ENCODE measurements at regions of chr6 and their contacts with region 1.

Region 1: GRCh38 chr6:28124102-28124970 is at the start of gene ZSCAN16:
- DNase-seq: peak; percentile 79 to 85
- H3K4me3 ChIP-seq: peak within 1 kb of the TSS; percentile 64
- H3K27ac ChIP-seq: 0 out of 2 replicates have a peak within 1 kb of the TSS, but pooled peaks have one; percentile 7
- H3K4me1 ChIP-seq: peaks cover 7% of the 10 kb centered on the region
- H3K27me3 ChIP-seq: no peaks in the 10 kb centered on the region
- CTCF ChIP-seq: no peak
- total RNA-seq, gene ZSCAN16: 5.6 and 5.9 TPM in 2 replicates

Region 2: DNA sequence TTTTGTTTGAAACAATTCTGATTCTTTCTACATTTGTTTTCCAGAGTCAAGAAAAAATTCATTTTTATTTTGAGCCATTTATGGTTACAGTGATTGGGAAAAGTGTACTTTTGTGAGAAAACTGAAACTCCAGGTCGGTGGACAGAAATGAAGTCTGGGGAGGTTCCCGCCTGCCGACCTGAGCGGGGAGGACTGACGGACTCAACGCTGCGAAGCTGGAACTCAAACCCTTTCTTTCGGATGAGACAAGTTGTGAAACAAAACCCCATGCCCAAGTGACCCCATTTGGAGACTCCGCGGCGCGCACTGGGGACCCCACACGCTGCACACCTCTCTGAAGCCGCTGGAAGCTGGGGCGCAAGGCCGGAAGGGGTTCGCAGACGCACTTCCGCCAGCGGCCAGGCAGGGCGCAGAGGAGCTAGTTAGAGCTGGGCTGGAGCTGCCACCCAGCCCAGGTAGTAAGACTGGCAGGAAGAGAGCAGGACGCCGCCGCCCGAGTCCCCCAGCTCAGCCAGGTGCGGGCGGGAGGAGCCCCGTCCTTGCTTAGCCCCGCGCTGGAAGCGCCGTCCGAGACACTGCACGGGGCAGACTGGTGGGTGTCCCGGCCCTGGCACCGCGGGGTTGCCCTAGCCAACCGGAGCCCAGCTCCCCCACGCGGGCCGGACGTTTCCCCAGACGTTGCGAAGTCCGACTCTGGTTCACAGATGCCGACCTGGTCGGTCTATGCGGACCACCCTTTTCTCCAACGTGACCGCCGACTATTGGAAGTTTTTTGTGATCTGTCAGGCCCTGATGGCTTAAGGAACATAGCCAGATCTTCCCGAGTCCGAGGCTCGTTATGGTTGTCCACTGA is 19.7 kb before region 1 on chr6:
- CTCF ChIA-PET with region 1: no interaction called
- POLR2A ChIA-PET with region 1: no interaction called
- intact Hi-C with region 1: loop called (anchors 1 kb)
- DNase-seq: peak; percentile 73 to 80
- H3K4me3 ChIP-seq: peak overlapping the region; percentile 83
- H3K27ac ChIP-seq: no peak overlapping the region
- H3K4me1 ChIP-seq: peaks cover 11% of the 10 kb centered on the region
- H3K27me3 ChIP-seq: peaks cover 7% of the 10 kb centered on the region; the same call in 1 of the 2 replicates
- CTCF ChIP-seq: peak; percentile 74

Region 3: GRCh38 chr6:28371706-28372451 is 247.5 kb after region 1 on chr6:
- CTCF ChIA-PET with region 1: no interaction called
- POLR2A ChIA-PET with region 1: interaction called, 11 read pairs
- intact Hi-C with region 1: no loop called
- DNase-seq: no peak
- H3K4me3 ChIP-seq: no peak overlapping the region
- H3K27ac ChIP-seq: no peak overlapping the region
- H3K4me1 ChIP-seq: no peaks in the 10 kb centered on the region
- H3K27me3 ChIP-seq: no peaks in the 10 kb centered on the region
- CTCF ChIP-seq: no peak

Region 4: GRCh38 chr6:28758046-28758817 is 633.9 kb after region 1 on chr6:
- CTCF ChIA-PET with region 1: no interaction called
- POLR2A ChIA-PET with region 1: no interaction called
- intact Hi-C with region 1: no loop called
- DNase-seq: peak; percentile 23 to 51
- H3K4me3 ChIP-seq: peak overlapping the region; percentile 59
- H3K27ac ChIP-seq: no peak overlapping the region
- H3K4me1 ChIP-seq: peaks cover 4% of the 10 kb centered on the region; the same call in 1 of the 2 replicates
- H3K27me3 ChIP-seq: no peaks in the 10 kb centered on the region
- CTCF ChIP-seq: no peak